Calu3 (cell line): ENCODE measurements at regions of chr18 and their contacts with region 1.

Region 1: GRCh38 chr18:33116376-33116775 is 324.1 kb downstream of the CCDC178 start:
- DNase-seq: peak; percentile 79
- H3K4me3 Mint-ChIP-seq: peak overlapping the region; percentile 21
- H3K27ac Mint-ChIP-seq: peak overlapping the region; percentile 67
- H3K4me1 Mint-ChIP-seq: peaks cover 41% of the 10 kb centered on the region
- H3K27me3 Mint-ChIP-seq: no peaks in the 10 kb centered on the region
- CTCF ChIP-seq: no peak

Region 2: GRCh38 chr18:33184958-33185357 is 68.6 kb after region 1 on chr18:
- CTCF ChIA-PET with region 1: no interaction called
- intact Hi-C with region 1: loop called (anchors 5 kb)
- DNase-seq: no peak
- H3K4me3 Mint-ChIP-seq: no peak overlapping the region
- H3K27ac Mint-ChIP-seq: peak overlapping the region; percentile 7
- H3K4me1 Mint-ChIP-seq: peaks cover 36% of the 10 kb centered on the region
- H3K27me3 Mint-ChIP-seq: no peaks in the 10 kb centered on the region
- CTCF ChIP-seq: peak; percentile 58

Region 3: DNA sequence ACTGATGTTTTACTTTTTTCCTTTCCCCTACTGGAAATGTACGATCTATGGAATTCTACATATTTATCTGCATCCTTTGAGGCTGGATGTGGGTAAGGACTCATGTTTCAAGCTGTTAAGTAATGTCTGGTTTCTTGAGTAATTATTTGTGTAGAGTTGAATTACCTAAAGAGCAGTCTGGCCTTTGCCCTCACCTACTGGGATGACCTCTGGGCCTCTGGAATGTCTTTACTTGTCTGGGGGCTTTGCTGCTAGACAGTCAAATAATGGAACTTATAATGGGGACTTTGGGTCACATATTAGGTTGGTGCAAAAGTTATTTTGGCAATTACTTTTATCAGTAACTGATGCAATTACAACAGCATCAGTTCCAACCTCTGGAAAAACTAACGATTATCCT is 79.4 kb after region 1 on chr18:
- CTCF ChIA-PET with region 1: interaction called, 3 read pairs
- intact Hi-C with region 1: loop called (anchors 5 kb)
- DNase-seq: no peak
- H3K4me3 Mint-ChIP-seq: no peak overlapping the region
- H3K27ac Mint-ChIP-seq: no peak overlapping the region
- H3K4me1 Mint-ChIP-seq: peaks cover 10% of the 10 kb centered on the region
- H3K27me3 Mint-ChIP-seq: no peaks in the 10 kb centered on the region
- CTCF ChIP-seq: no peak

Region 4: GRCh38 chr18:33282709-33283333 is 166.4 kb after region 1 on chr18:
- CTCF ChIA-PET with region 1: no interaction called
- intact Hi-C with region 1: no loop called
- DNase-seq: no peak
- H3K4me3 Mint-ChIP-seq: no peak overlapping the region
- H3K27ac Mint-ChIP-seq: no peak overlapping the region
- H3K4me1 Mint-ChIP-seq: no peaks in the 10 kb centered on the region
- H3K27me3 Mint-ChIP-seq: no peaks in the 10 kb centered on the region
- CTCF ChIP-seq: no peak